ENCODE measurements at regions of chr5 and their contacts with region 1.

Region 1: GRCh38 chr5:65562731-65563701 is at the starts of genes CENPK and PPWD1:
- DNase-seq: peak; percentile 87 to 97 (median 95)
- ATAC-seq: peak; percentile 95 to 99 (median 97)
- H3K4me3 ChIP-seq: peak within 1 kb of the TSS; percentile 96 to 99
- H3K4me3 Mint-ChIP-seq: peak within 1 kb of the TSS; percentile 95 to 98 (median 96)
- H3K27ac ChIP-seq: peak within 1 kb of the TSS; percentile 97
- H3K27ac Mint-ChIP-seq: peak within 1 kb of the TSS; percentile 97 to 99
- H3K4me1 ChIP-seq: peaks cover 16 to 20% of the 10 kb centered on the region in 2 experiments
- H3K4me1 Mint-ChIP-seq: peaks cover 54 to 71% (median 68%) of the 10 kb centered on the region in 3 donors
- H3K27me3 ChIP-seq: no peaks in the 10 kb centered on the region
- H3K27me3 Mint-ChIP-seq: no peaks in the 10 kb centered on the region
- total RNA-seq, gene CENPK: 12.4 to 85.4 (median 50.5) TPM
- total RNA-seq, gene PPWD1: 79.2 to 102 (median 94.3) TPM

Region 2: DNA sequence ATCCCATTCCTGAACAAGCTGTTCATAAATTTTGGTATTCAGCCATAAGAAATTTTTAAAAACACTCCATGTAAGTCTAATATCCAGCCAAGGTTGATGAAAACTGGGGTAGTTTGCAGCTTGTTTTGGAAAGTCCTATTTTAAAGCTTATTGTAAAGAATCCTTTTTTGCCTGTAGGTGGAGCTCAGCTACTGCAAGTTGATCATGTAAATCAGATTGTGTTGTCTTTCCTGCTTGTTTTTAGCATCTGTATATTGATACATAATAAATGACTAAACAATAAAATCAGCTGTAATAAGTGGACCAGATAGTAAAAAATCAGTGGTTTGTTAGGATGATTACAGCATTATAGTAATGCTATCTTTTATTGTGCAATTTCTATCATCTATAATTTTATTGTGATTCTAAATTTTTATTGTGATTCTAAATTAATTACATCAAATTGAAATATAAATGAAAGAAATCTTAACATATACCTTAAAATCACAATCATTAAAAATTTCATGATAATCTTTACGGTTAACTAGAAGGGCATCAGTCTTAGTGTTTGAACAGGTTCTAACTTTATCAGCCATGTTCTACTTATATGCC is 751.9 kb before region 1 on chr5:
- CTCF ChIA-PET with region 1: interaction called, 3 to 10 read pairs
- POLR2A ChIA-PET with region 1: interaction called in 1 of 2 experiments, 4 read pairs
- DNase-seq: peak in 6 of 35 experiments; percentile 0 to 61 (median 4)
- ATAC-seq: no peak
- H3K4me3 ChIP-seq: no peak overlapping the region
- H3K4me3 Mint-ChIP-seq: no peak overlapping the region
- H3K27ac ChIP-seq: no peak overlapping the region
- H3K27ac Mint-ChIP-seq: no peak overlapping the region
- H3K4me1 ChIP-seq: no peaks in the 10 kb centered on the region
- H3K4me1 Mint-ChIP-seq: no peaks in the 10 kb centered on the region
- H3K27me3 ChIP-seq: no peaks in the 10 kb centered on the region
- H3K27me3 Mint-ChIP-seq: no peaks in the 10 kb centered on the region

Region 3: DNA sequence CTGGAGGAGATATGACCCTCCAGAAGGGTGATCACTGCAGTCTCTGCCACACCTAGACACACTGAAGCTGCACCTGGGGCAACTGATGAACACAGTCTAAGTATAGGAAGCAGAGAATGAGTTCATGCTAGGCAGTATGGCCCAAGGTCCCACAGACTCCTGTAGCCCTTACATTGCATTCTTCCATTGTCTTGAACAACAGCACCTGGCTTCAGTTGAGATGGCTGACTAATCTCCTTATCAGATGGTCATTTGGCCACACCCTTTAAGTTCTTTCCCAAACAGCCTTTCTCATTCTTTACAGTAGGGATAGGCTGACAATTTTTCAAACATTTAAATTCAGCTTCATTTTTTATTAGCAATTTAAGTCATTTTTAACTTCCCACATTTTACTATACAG is 23.2 kb before region 1 on chr5:
- CTCF ChIA-PET with region 1: no interaction called
- POLR2A ChIA-PET with region 1: no interaction called
- DNase-seq: no peak
- ATAC-seq: no peak
- H3K4me3 ChIP-seq: no peak overlapping the region
- H3K4me3 Mint-ChIP-seq: no peak overlapping the region
- H3K27ac ChIP-seq: no peak overlapping the region
- H3K27ac Mint-ChIP-seq: no peak overlapping the region
- H3K4me1 ChIP-seq: no peaks in the 10 kb centered on the region
- H3K4me1 Mint-ChIP-seq: peaks cover 0 to 2% (median 0%) of the 10 kb centered on the region in 3 donors
- H3K27me3 ChIP-seq: no peaks in the 10 kb centered on the region
- H3K27me3 Mint-ChIP-seq: no peaks in the 10 kb centered on the region

Region 4: GRCh38 chr5:65577141-65577540 is 14.1 kb after region 1 on chr5:
- CTCF ChIA-PET with region 1: interaction called in 1 of 2 experiments, 3 read pairs
- POLR2A ChIA-PET with region 1: interaction called in 1 of 2 experiments, 10 read pairs
- DNase-seq: no peak
- ATAC-seq: no peak
- H3K4me3 ChIP-seq: no peak overlapping the region
- H3K4me3 Mint-ChIP-seq: no peak overlapping the region
- H3K27ac ChIP-seq: no peak overlapping the region
- H3K27ac Mint-ChIP-seq: peak overlapping the region in 1 of 2 donors; percentile 72
- H3K4me1 ChIP-seq: no peaks in the 10 kb centered on the region
- H3K4me1 Mint-ChIP-seq: peaks cover 21 to 44% (median 34%) of the 10 kb centered on the region in 3 donors
- H3K27me3 ChIP-seq: no peaks in the 10 kb centered on the region
- H3K27me3 Mint-ChIP-seq: no peaks in the 10 kb centered on the region

Region 5: GRCh38 chr5:65624571-65625555 is 61.8 kb after region 1 on chr5 and contains the starts of genes SHLD3 and TRAPPC13:
- CTCF ChIA-PET with region 1: interaction called in 1 of 2 experiments, 6 read pairs
- POLR2A ChIA-PET with region 1: interaction called in 1 of 2 experiments, 14 read pairs
- DNase-seq: peak; percentile 60 to 93 (median 84)
- ATAC-seq: peak; percentile 70 to 77 (median 74)
- H3K4me3 ChIP-seq: peak within 1 kb of the TSS; percentile 74 to 92
- H3K4me3 Mint-ChIP-seq: peak within 1 kb of the TSS; percentile 93 to 99 (median 97)
- H3K27ac ChIP-seq: peak within 1 kb of the TSS; percentile 86
- H3K27ac Mint-ChIP-seq: peak within 1 kb of the TSS; percentile 98 to 99
- H3K4me1 ChIP-seq: peaks cover 20 to 22% of the 10 kb centered on the region in 2 experiments
- H3K4me1 Mint-ChIP-seq: peaks cover 53 to 62% (median 54%) of the 10 kb centered on the region in 3 donors
- H3K27me3 ChIP-seq: no peaks in the 10 kb centered on the region
- H3K27me3 Mint-ChIP-seq: no peaks in the 10 kb centered on the region
- total RNA-seq, gene SHLD3: 3.7 to 12.2 (median 6.1) TPM
- total RNA-seq, gene TRAPPC13: 14.3 to 19.2 (median 16.5) TPM

Measured in T-cell (primary cell).